CD4-positive, alpha-beta memory T cell (primary cell): ENCODE measurements at regions of chr14 and their contacts with region 1.

Region 1: GRCh38 chr14:67695394-67695949 is at the start of gene RDH11:
- DNase-seq: peak; percentile 83 to 91 (median 84)
- H3K4me3 ChIP-seq: peak within 1 kb of the TSS; percentile 91 to 94
- H3K4me3 Mint-ChIP-seq: peak within 1 kb of the TSS; percentile 89 to 93 (median 92)
- H3K27ac ChIP-seq: peak within 1 kb of the TSS; percentile 75
- H3K27ac Mint-ChIP-seq: peak within 1 kb of the TSS; percentile 78 to 98 (median 90)
- H3K4me1 ChIP-seq: peaks cover 15% of the 10 kb centered on the region
- H3K4me1 Mint-ChIP-seq: peaks cover 10 to 29% (median 18%) of the 10 kb centered on the region in 4 donors
- H3K27me3 ChIP-seq: no peaks in the 10 kb centered on the region
- H3K27me3 Mint-ChIP-seq: no peaks in the 10 kb centered on the region
- total RNA-seq, gene RDH11: 45.2 to 46.0 TPM

Region 2: DNA sequence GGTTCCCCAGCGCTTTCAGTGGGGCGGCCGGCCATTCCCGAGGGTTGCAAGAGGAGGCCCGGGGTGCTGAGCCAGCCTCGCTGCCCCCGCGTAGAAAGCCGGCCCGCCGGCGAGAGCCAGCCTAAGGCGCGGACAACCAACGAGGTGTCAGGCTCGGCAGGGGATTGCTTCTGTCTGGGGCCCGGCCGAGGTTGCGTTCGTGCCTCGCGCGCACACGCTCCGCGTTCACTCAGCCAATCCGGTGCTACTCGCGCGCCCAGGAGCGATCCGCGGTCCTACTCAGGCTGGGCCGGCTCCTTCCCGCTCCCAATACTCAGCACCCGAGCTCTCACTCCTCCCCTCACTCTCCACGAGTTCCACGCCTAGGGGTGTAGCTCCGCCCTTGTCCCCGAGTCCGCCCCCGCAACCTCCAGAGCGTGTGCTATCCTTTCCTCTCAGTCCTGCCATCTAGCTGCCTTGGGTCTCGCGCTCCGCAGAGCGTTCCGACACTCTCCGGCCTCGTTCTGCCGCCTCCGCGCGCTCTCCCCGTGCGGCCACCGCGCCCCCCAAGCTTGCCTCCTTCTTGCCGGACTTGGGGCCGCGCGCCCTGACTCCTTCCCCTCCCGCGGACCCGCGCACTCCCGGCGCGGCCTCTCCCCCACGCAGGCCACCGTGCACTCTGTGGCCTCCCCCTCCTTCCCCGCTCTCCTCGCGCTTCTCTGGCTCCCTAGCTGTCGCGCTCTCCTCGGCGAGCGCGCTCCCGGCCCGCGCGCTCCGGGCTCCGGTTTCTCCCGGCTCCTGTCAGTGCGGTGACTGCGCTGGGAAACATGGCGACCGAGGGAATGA is 1187.5 kb before region 1 on chr14 and contains the start of gene GPHN:
- CTCF ChIA-PET with region 1: no interaction called
- POLR2A ChIA-PET with region 1: no interaction called
- intact Hi-C with region 1: loop called (anchors 2 kb)
- DNase-seq: peak; percentile 85 to 92 (median 89)
- H3K4me3 ChIP-seq: peak within 1 kb of the TSS; percentile 48 to 79
- H3K4me3 Mint-ChIP-seq: peak within 1 kb of the TSS; percentile 98 to 100 (median 99)
- H3K27ac ChIP-seq: peak within 1 kb of the TSS; percentile 73
- H3K27ac Mint-ChIP-seq: peak within 1 kb of the TSS; percentile 92 to 98 (median 95)
- H3K4me1 ChIP-seq: peaks cover 40% of the 10 kb centered on the region
- H3K4me1 Mint-ChIP-seq: peaks cover 18 to 53% (median 32%) of the 10 kb centered on the region in 4 donors
- H3K27me3 ChIP-seq: no peaks in the 10 kb centered on the region
- H3K27me3 Mint-ChIP-seq: no peaks in the 10 kb centered on the region
- total RNA-seq, gene GPHN: 15.5 to 18.8 TPM

Region 3: DNA sequence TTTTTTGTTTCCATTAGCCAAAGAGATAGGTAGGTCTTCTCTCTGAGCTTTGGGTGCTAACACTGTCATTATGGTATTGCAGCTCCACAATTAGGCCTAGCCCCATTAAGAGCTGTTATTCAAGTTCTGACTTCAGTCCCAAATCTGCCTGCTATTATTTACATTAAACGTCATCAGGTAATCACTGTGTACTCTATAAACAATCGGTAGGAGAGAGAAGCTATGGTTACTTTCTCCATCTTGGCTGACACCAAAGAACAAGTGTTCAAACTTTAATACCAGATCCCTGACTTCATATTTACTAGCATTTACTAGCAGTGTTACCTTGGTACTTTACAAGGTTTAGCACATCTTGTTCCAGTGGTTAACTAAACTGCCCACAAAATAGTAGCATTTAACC is 811.3 kb before region 1 on chr14:
- CTCF ChIA-PET with region 1: no interaction called
- POLR2A ChIA-PET with region 1: no interaction called
- intact Hi-C with region 1: no loop called
- DNase-seq: no peak
- H3K4me3 ChIP-seq: no peak overlapping the region
- H3K4me3 Mint-ChIP-seq: no peak overlapping the region
- H3K27ac ChIP-seq: no peak overlapping the region
- H3K27ac Mint-ChIP-seq: no peak overlapping the region
- H3K4me1 ChIP-seq: no peaks in the 10 kb centered on the region
- H3K4me1 Mint-ChIP-seq: no peaks in the 10 kb centered on the region
- H3K27me3 ChIP-seq: no peaks in the 10 kb centered on the region
- H3K27me3 Mint-ChIP-seq: no peaks in the 10 kb centered on the region

Region 4: DNA sequence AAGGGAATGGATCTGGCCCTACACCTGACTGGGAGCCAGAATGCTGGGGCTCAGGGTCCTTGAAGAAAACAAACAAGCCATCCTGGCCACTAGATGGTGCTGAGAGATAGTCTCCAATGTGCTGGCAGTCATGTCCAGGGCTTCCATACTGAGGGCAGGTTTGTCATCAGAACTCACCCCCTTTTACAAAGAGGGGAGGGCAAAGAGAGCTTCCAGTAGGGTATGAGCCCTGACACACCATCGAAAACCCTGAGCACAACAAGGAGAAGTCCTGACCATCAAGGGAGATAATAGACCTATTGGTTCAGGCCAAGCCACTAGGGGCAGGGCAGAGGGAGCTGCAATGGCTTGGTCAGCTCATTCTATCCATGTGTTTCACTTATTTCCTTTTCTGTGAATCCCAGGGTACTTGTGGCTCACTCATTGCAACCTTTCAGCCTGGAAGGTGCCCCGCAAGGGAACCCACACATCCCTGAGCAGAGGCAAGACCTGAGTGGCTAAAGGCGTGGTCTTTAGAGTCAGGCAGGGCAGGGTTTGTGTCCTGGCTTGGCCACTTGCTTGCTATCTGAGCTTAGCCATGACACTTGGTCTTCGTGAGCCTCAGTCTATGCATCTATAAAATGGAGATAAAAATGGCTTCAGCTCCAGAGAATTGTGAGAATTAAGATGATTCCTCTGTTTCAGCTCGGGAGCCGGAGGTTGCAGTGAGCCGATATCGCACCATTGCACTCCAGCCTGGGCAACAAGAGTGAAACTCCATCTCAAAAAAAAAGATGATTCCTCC is 168.6 kb before region 1 on chr14:
- CTCF ChIA-PET with region 1: interaction called, 11 read pairs
- POLR2A ChIA-PET with region 1: no interaction called
- intact Hi-C with region 1: no loop called
- DNase-seq: peak; percentile 30 to 47 (median 31)
- H3K4me3 ChIP-seq: no peak overlapping the region
- H3K4me3 Mint-ChIP-seq: no peak overlapping the region
- H3K27ac ChIP-seq: no peak overlapping the region
- H3K27ac Mint-ChIP-seq: no peak overlapping the region
- H3K4me1 ChIP-seq: no peaks in the 10 kb centered on the region
- H3K4me1 Mint-ChIP-seq: peaks cover 2 to 9% (median 5%) of the 10 kb centered on the region in 4 donors
- H3K27me3 ChIP-seq: peaks cover 15% of the 10 kb centered on the region
- H3K27me3 Mint-ChIP-seq: peaks cover 13 to 44% of the 10 kb centered on the region in 2 donors

Region 5: GRCh38 chr14:67652189-67652588 is 43.3 kb before region 1 on chr14:
- CTCF ChIA-PET with region 1: no interaction called
- POLR2A ChIA-PET with region 1: no interaction called
- intact Hi-C with region 1: loop called (anchors 1 kb)
- DNase-seq: no peak
- H3K4me3 ChIP-seq: no peak overlapping the region
- H3K4me3 Mint-ChIP-seq: no peak overlapping the region
- H3K27ac ChIP-seq: no peak overlapping the region
- H3K27ac Mint-ChIP-seq: peak overlapping the region in 1 of 7 donors; percentile 52
- H3K4me1 ChIP-seq: no peaks in the 10 kb centered on the region
- H3K4me1 Mint-ChIP-seq: no peaks in the 10 kb centered on the region
- H3K27me3 ChIP-seq: no peaks in the 10 kb centered on the region
- H3K27me3 Mint-ChIP-seq: no peaks in the 10 kb centered on the region

Region 6: GRCh38 chr14:67816326-67817002 is 121.0 kb after region 1 on chr14 and contains the start of gene ZFYVE26:
- CTCF ChIA-PET with region 1: no interaction called
- POLR2A ChIA-PET with region 1: no interaction called
- intact Hi-C with region 1: loop called (anchors 1 kb)
- DNase-seq: peak; percentile 87 to 95 (median 88)
- H3K4me3 ChIP-seq: peak within 1 kb of the TSS; percentile 54 to 86
- H3K4me3 Mint-ChIP-seq: peak within 1 kb of the TSS; percentile 89 to 99 (median 96)
- H3K27ac ChIP-seq: peak within 1 kb of the TSS; percentile 47
- H3K27ac Mint-ChIP-seq: peak within 1 kb of the TSS; percentile 86 to 98 (median 96)
- H3K4me1 ChIP-seq: peaks cover 38% of the 10 kb centered on the region
- H3K4me1 Mint-ChIP-seq: peaks cover 39 to 61% (median 46%) of the 10 kb centered on the region in 4 donors
- H3K27me3 ChIP-seq: no peaks in the 10 kb centered on the region
- H3K27me3 Mint-ChIP-seq: no peaks in the 10 kb centered on the region
- total RNA-seq, gene ZFYVE26: 35.2 to 38.1 TPM